HepG2 (cell line): ENCODE measurements at regions of chr16 and their contacts with region 1.

Region 1: GRCh38 chr16:85717393-85718121 is 28.8 kb upstream of the GINS2 start:
- DNase-seq: peak; percentile 60
- ATAC-seq: peak; percentile 72
- H3K4me3 ChIP-seq: no peak overlapping the region
- H3K27ac ChIP-seq: no peak overlapping the region
- H3K4me1 ChIP-seq: 0 out of 2 replicates have a peak, but pooled peaks cover 5% of the 10 kb centered on the region
- H3K27me3 ChIP-seq: peaks cover 7 to 36% of the 10 kb centered on the region in 2 experiments; a peak in 4 of 5 replicates
- CTCF ChIP-seq: peak; percentile 87
- EP300 ChIP-seq: no peak
- POLR2A ChIP-seq: no peak
- RAD21 ChIP-seq: peak; percentile 87

Region 2: GRCh38 chr16:85393674-85394483 is 323.7 kb before region 1 on chr16:
- CTCF ChIA-PET with region 1: interaction called, 5 read pairs
- POLR2A ChIA-PET with region 1: no interaction called
- in situ Hi-C with region 1: no loop called
- intact Hi-C with region 1: loop called (anchors 10 kb)
- DNase-seq: no peak
- ATAC-seq: peak; percentile 66
- H3K4me3 ChIP-seq: no peak overlapping the region
- H3K27ac ChIP-seq: no peak overlapping the region
- H3K4me1 ChIP-seq: peaks cover 50% of the 10 kb centered on the region
- H3K27me3 ChIP-seq: peaks cover 12 to 30% of the 10 kb centered on the region in 2 experiments; a peak in 4 of 5 replicates
- CTCF ChIP-seq: peak; percentile 95
- EP300 ChIP-seq: no peak
- POLR2A ChIP-seq: no peak
- RAD21 ChIP-seq: peak; percentile 85

Region 3: GRCh38 chr16:85659805-85660495 is 57.6 kb before region 1 on chr16:
- CTCF ChIA-PET with region 1: interaction called, 11 read pairs
- POLR2A ChIA-PET with region 1: no interaction called
- in situ Hi-C with region 1: loop called (anchors 5 kb)
- intact Hi-C with region 1: no loop called
- DNase-seq: peak; percentile 39
- ATAC-seq: peak; percentile 71
- H3K4me3 ChIP-seq: no peak overlapping the region
- H3K27ac ChIP-seq: no peak overlapping the region
- H3K4me1 ChIP-seq: no peaks in the 10 kb centered on the region
- H3K27me3 ChIP-seq: no peaks in the 10 kb centered on the region
- CTCF ChIP-seq: peak; percentile 95
- EP300 ChIP-seq: no peak
- POLR2A ChIP-seq: no peak
- RAD21 ChIP-seq: peak; percentile 74

Region 4: GRCh38 chr16:85675251-85675927 is 42.2 kb before region 1 on chr16:
- CTCF ChIA-PET with region 1: interaction called, 18 read pairs
- POLR2A ChIA-PET with region 1: no interaction called
- in situ Hi-C with region 1: no loop called
- intact Hi-C with region 1: loop called (anchors 1 kb)
- DNase-seq: peak; percentile 38
- ATAC-seq: peak; percentile 29; the same call in 2 of the 3 replicates
- H3K4me3 ChIP-seq: no peak overlapping the region
- H3K27ac ChIP-seq: no peak overlapping the region
- H3K4me1 ChIP-seq: no peaks in the 10 kb centered on the region
- H3K27me3 ChIP-seq: no peaks in the 10 kb centered on the region
- CTCF ChIP-seq: peak; percentile 50
- EP300 ChIP-seq: no peak
- POLR2A ChIP-seq: no peak
- RAD21 ChIP-seq: no peak